ENCODE measurements at regions of chrX and their contacts with region 1.

Region 1: GRCh38 chrX:130902783-130903613 is at the start of gene ENOX2:
- DNase-seq: peak; percentile 91 to 93
- ATAC-seq: peak; percentile 100
- H3K4me3 ChIP-seq: peak within 1 kb of the TSS; percentile 52 to 76 (median 68)
- H3K27ac ChIP-seq: peak within 1 kb of the TSS; percentile 73 to 89 (median 84)
- H3K4me1 ChIP-seq: no peaks in the 10 kb centered on the region
- H3K27me3 ChIP-seq: no peaks in the 10 kb centered on the region
- CTCF ChIP-seq: no peak
- POLR2A ChIP-seq: peak; percentile 82 to 86
- total RNA-seq, gene ENOX2: 7.2 to 10.9 (median 7.9) TPM

Region 2: DNA sequence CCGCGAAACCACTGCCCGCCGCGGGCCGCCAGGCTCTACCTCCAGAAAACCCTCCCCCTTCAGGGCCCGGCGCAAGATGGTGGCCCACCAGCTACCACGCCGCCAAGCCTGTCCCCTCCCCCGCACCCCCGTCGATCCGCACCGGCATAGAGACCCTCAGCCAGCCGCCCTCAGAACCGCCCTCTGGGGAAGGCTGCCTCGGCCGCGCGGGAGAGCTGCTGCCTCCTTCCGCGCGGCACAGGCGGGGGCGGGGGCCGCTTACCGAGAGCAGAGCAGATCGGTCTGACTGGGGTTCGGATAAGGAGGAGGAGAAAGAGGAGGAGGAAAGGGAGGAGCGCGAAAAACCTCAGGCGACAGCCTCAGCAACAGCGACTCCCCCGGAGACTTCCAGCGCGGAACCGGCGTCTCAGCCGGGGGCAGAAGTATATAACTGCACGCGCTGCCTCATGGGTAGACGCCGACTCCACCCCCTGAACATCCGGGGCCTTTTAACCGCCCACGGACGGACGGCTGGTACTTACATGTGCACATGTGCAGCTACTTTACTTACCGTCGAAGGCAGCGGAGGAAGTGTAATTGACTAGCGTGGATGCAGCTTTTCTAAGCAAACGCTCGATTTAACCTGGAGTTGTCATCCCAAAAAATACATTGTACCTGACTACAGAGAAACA is 634.4 kb before region 1 on chrX and contains the start of gene ZNF280C:
- in situ Hi-C with region 1: no loop called
- intact Hi-C with region 1: loop called (anchors 10 kb)
- DNase-seq: peak; percentile 63 to 82
- ATAC-seq: peak; percentile 95 to 96
- H3K4me3 ChIP-seq: peak within 1 kb of the TSS; percentile 66 to 81 (median 75)
- H3K27ac ChIP-seq: peak within 1 kb of the TSS; percentile 83 to 87 (median 84)
- H3K4me1 ChIP-seq: no peaks in the 10 kb centered on the region
- H3K27me3 ChIP-seq: no peaks in the 10 kb centered on the region
- CTCF ChIP-seq: peak in 1 of 5 experiments; percentile 24
- POLR2A ChIP-seq: peak; percentile 75 to 83
- total RNA-seq, gene ZNF280C: 1.5 to 3.8 (median 3.3) TPM

Region 3: DNA sequence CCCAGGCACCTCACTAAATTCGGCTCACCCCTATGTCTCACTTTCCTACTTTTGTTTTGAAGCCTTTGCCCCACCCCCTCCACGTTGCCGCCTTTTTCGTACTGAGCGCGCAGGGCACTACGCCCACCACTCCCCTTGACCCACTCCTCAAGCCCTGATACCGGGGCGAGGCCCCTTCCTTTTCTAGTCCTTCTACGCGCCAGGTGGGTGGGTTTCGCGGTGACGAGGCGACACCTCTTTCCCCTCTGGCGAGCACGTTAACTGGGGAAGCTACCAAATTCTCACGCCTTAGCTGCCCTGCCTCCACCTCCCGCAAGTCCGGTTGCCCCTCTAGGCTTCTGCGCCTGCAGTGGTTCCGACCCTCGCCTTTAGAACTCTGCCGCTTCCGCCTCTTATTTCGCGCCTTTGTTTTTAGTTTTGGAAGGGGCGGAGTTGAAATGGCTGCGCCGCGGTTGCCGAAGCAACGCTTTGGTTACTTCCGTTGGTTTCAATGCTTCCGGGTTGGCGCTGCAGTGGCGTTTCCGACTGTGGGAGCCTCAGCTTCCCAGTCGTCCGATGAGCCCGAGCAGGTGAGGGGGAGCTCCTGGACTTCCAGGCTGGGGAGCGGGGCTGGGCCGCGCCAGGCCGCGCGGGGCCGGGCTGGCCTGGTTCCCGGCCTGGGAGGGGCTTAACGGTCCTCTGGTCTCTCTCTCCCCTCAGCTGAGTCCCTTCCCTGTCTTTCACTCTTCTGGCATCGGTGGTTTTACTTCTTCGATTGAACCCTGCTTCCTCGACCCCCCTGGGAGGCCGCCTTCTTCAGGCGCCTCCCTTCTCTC is 563.4 kb before region 1 on chrX and contains the start of gene SLC25A14:
- in situ Hi-C with region 1: no loop called
- intact Hi-C with region 1: loop called (anchors 10 kb)
- DNase-seq: peak; percentile 19 to 57
- ATAC-seq: peak; percentile 80 to 90
- H3K4me3 ChIP-seq: peak within 1 kb of the TSS; percentile 66 to 80 (median 75)
- H3K27ac ChIP-seq: peak within 1 kb of the TSS; percentile 33 to 66 (median 62)
- H3K4me1 ChIP-seq: no peaks in the 10 kb centered on the region
- H3K27me3 ChIP-seq: no peaks in the 10 kb centered on the region
- CTCF ChIP-seq: no peak
- POLR2A ChIP-seq: no peak
- total RNA-seq, gene SLC25A14: 2.9 to 7.0 (median 5.1) TPM

Region 4: GRCh38 chrX:130393451-130394074 is 509.4 kb before region 1 on chrX:
- in situ Hi-C with region 1: loop called in 1 of 4 experiments (anchors 25 kb)
- intact Hi-C with region 1: no loop called
- DNase-seq: peak in 1 of 2 donors; percentile 15
- ATAC-seq: no peak
- H3K4me3 ChIP-seq: no peak overlapping the region
- H3K27ac ChIP-seq: no peak overlapping the region
- H3K4me1 ChIP-seq: no peaks in the 10 kb centered on the region
- H3K27me3 ChIP-seq: no peaks in the 10 kb centered on the region
- CTCF ChIP-seq: peak in 2 of 5 experiments; percentile 42 to 53
- POLR2A ChIP-seq: no peak

Region 5: DNA sequence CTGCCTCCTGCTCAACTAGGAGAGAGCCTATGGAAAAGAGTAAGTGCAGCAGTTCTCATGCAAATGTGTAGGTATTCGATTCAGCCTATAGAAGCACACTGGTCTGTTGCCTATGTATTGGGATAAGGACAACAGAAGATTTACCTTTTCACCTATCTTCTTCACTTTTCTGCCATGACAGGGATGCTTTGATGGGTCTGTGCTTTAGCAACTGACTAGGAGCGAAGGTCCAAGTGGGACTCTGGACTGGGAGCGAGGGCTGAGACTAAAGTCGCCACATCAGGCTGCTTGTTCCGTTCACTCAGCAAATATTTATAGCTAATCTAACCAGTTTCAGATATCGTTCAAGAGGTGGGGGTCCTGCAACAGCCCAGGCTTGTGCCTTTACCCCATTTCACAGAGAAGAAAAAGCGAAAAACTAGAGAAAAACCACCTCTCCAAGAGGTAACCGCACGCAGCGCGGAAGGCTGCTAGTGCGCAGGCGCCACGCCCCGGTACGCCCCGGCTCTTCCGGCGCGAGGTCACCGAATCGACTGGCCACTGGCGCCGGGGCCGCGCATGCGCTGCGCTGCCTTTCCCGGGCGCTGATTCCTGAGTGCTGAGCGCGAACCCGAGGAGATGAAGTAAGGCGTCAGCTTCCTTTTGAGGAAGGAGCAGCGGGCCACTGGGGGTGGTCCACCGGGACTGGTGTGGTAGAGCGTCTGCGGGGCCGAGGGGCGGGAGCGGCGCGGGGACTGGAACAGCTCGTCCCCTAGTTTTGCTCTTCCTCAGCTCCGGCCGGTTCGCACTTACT is 501.4 kb before region 1 on chrX and contains the start of gene RBMX2:
- in situ Hi-C with region 1: loop called in 1 of 4 experiments (anchors 25 kb)
- intact Hi-C with region 1: loop called (anchors 2 kb)
- DNase-seq: peak; percentile 43 to 64
- ATAC-seq: peak; percentile 86 to 96
- H3K4me3 ChIP-seq: peak within 1 kb of the TSS; percentile 66 to 90 (median 72)
- H3K27ac ChIP-seq: peak within 1 kb of the TSS; percentile 74 to 91 (median 83)
- H3K4me1 ChIP-seq: peaks cover 3 to 5% of the 10 kb centered on the region in 2 donors
- H3K27me3 ChIP-seq: no peaks in the 10 kb centered on the region
- CTCF ChIP-seq: no peak
- POLR2A ChIP-seq: peak; percentile 57 to 61
- total RNA-seq, gene RBMX2: 5.9 to 12.4 (median 9.1) TPM

Region 6: DNA sequence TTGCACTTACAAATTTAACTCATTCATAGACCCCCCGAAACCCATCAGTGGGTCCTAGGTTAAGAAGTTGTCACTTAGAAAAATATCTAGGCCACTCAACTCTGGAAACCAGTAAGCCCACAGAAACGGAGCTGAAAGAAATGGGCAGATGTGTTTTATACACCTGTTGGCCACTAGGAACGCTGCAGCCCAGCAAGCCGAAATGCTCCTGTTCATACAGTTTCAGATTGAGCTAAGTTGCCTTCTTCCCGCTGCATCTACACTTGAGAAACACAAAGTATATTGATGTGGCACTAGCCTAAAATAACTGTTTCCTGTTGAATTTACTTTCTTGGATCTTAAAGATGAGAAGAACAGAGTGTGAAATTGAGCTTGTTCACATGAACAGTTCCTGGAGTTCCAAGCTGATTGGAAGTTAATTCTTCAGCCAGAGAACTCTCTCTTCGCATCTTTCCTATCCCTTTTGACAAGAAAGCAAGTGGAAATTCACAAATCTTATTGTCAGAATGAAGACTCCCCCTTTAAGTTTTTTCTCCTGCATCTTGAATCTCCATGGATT is 327.1 kb before region 1 on chrX:
- in situ Hi-C with region 1: loop called in 1 of 4 experiments (anchors 25 kb)
- intact Hi-C with region 1: no loop called
- DNase-seq: no peak
- ATAC-seq: no peak
- H3K4me3 ChIP-seq: no peak overlapping the region
- H3K27ac ChIP-seq: no peak overlapping the region
- H3K4me1 ChIP-seq: no peaks in the 10 kb centered on the region
- H3K27me3 ChIP-seq: peaks cover 0 to 4% (median 0%) of the 10 kb centered on the region in 3 donors
- CTCF ChIP-seq: peak; percentile 37 to 70 (median 54)
- POLR2A ChIP-seq: no peak

Region 7: GRCh38 chrX:130772105-130772775 is 130.8 kb before region 1 on chrX:
- in situ Hi-C with region 1: no loop called
- intact Hi-C with region 1: loop called (anchors 10 kb)
- DNase-seq: peak; percentile 23 to 28
- ATAC-seq: peak; percentile 85 to 88
- H3K4me3 ChIP-seq: no peak overlapping the region
- H3K27ac ChIP-seq: peak overlapping the region; percentile 58 to 80 (median 72)
- H3K4me1 ChIP-seq: peaks cover 4 to 39% of the 10 kb centered on the region in 2 donors
- H3K27me3 ChIP-seq: no peaks in the 10 kb centered on the region
- CTCF ChIP-seq: no peak
- POLR2A ChIP-seq: no peak

Region 8: DNA sequence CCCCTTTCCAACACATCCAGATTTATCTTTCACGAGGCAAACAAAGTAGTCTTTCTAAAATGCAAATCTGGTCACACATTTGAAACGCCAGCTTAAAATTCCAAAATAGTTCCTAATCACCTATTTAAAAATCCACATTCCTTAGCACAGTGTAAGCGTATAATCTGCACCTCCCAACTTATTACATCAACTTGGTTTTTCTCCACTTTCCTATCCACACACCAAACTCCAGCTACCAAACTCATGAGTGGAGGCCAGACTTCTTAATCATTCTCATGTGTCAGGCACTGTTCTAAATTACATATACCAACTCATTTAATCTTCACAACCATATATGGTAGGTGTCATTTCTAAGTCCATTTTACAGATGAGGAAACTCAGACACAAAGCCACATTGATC is 33.8 kb before region 1 on chrX:
- in situ Hi-C with region 1: no loop called
- intact Hi-C with region 1: no loop called
- DNase-seq: no peak
- ATAC-seq: no peak
- H3K4me3 ChIP-seq: no peak overlapping the region
- H3K27ac ChIP-seq: no peak overlapping the region
- H3K4me1 ChIP-seq: no peaks in the 10 kb centered on the region
- H3K27me3 ChIP-seq: no peaks in the 10 kb centered on the region
- CTCF ChIP-seq: no peak
- POLR2A ChIP-seq: no peak

Region 9: DNA sequence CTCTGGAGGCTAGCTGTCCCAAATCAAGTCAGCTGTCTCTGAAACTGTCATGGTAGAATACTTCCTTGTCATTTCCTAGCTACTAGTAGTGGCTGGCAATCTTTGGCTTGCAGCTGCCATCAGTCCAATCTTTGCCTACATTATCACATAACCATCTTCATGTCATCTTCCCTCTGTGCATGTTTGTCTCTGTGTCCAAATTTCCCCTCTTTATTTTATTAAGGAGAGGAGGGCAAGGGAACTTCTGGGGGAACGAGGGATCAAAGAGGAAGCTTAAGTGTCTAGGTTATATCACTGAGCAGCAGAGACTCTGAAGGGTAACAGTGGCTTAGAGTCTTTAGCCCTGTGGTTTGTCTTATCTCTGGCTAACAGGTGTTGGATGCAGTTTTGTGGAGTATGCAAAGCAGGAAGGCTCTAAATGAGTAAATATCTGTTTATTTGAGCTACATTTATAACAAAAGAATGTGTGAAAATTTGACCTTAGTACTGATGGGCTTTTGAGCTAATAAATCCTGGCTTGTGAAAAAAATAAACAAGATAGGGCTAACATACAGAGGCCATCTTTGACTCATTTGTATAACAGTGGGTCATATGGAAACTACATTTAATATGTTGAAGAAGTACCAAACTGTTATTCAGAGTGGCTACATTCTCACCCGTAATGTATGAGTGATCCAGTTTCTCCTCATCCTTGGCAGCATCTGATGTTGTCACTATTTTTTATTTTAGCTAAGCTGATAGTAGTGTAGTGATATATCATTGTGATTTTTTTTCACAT is 49.5 kb after region 1 on chrX:
- in situ Hi-C with region 1: no loop called
- intact Hi-C with region 1: no loop called
- DNase-seq: no peak
- ATAC-seq: no peak
- H3K4me3 ChIP-seq: no peak overlapping the region
- H3K27ac ChIP-seq: no peak overlapping the region
- H3K4me1 ChIP-seq: no peaks in the 10 kb centered on the region
- H3K27me3 ChIP-seq: peaks cover 0 to 2% (median 0%) of the 10 kb centered on the region in 3 donors
- CTCF ChIP-seq: no peak
- POLR2A ChIP-seq: no peak

Region 10: DNA sequence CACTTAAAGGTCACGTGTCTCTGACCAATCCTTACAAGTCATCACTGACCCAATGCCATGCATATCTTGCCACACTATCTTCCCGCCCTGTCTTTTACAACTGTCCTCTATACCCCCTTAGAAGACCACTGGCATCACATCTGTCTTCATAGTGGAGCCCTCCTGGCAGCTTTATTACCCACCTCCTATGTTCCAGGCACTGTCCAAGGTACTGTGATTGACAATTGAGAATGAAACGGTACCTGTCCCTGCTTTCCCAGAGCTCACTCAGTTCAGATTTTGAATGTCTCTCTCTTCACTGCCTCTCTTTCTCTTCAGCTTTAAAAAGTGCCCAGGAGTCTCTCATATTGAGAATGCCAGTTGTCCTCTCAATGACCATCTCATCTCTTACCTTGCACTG is 243.7 kb after region 1 on chrX:
- in situ Hi-C with region 1: no loop called
- intact Hi-C with region 1: no loop called
- DNase-seq: no peak
- ATAC-seq: no peak
- H3K4me3 ChIP-seq: no peak overlapping the region
- H3K27ac ChIP-seq: no peak overlapping the region
- H3K4me1 ChIP-seq: no peaks in the 10 kb centered on the region
- H3K27me3 ChIP-seq: no peaks in the 10 kb centered on the region
- CTCF ChIP-seq: no peak
- POLR2A ChIP-seq: no peak

Region 11: GRCh38 chrX:131239057-131239456 is 336.1 kb after region 1 on chrX:
- in situ Hi-C with region 1: no loop called
- intact Hi-C with region 1: no loop called
- DNase-seq: no peak
- ATAC-seq: no peak
- H3K4me3 ChIP-seq: no peak overlapping the region
- H3K27ac ChIP-seq: no peak overlapping the region
- H3K4me1 ChIP-seq: no peaks in the 10 kb centered on the region
- H3K27me3 ChIP-seq: no peaks in the 10 kb centered on the region
- CTCF ChIP-seq: no peak
- POLR2A ChIP-seq: no peak